Mammary epithelial cell (primary cell): ENCODE measurements at regions of chr4 and their contacts with region 1.

Region 1: DNA sequence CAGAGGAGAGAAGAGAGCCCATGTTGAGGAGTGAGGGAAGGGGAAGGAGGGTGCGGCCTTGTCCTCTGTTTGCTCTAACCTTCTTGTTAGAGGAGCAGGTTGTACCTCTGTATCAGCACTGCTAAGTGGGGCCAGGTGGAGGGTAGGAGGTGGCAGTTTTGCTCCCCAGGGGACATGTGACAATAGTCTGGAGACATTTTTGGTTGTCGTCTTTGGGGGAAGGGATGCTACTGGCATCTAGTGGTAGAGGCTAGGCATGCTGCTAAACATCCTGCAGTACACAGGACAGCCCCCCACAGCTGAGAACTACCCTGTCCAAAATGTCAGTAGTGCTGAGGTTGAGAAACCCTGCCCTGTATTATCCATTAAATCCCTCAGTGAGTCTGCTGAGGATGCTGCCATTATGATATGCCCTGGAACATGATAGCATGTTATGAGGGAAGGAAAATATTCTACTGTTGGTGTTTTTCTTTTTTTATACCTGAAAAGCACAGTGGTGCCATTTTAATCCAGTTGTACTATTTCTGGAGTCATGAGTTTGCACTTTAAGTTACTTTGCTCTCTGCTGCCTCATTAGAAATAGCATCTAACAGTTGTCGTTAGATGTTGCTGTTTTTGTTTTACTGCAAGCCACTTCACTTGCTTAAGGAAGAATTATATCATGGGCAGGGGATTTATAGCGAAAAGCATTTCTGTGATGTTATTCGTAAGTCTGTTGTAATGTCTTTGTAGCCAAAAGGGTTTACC is 90.6 kb downstream of the LRP2BP start:
- DNase-seq: peak; percentile 26
- H3K4me3 ChIP-seq: no peak overlapping the region
- H3K27ac ChIP-seq: peak overlapping the region; percentile 100
- H3K4me1 ChIP-seq: peaks cover 32% of the 10 kb centered on the region
- H3K27me3 ChIP-seq: no peaks in the 10 kb centered on the region
- CTCF ChIP-seq: peak; percentile 25 to 34

Region 2: GRCh38 chr4:184688447-184688846 is 616.7 kb before region 1 on chr4:
- CTCF ChIA-PET with region 1: no interaction called
- dilution Hi-C with region 1: no loop called
- in situ Hi-C with region 1: no loop called
- intact Hi-C with region 1: loop called (anchors 2 kb)
- DNase-seq: peak; percentile 92
- H3K4me3 ChIP-seq: no peak overlapping the region
- H3K27ac ChIP-seq: peak overlapping the region; percentile 69
- H3K4me1 ChIP-seq: peaks cover 23% of the 10 kb centered on the region
- H3K27me3 ChIP-seq: no peaks in the 10 kb centered on the region
- CTCF ChIP-seq: no peak

Region 3: GRCh38 chr4:185209031-185209851 is 95.9 kb before region 1 on chr4 and contains the start of gene SNX25:
- CTCF ChIA-PET with region 1: interaction called, 4 read pairs
- dilution Hi-C with region 1: no loop called
- in situ Hi-C with region 1: no loop called
- intact Hi-C with region 1: loop called (anchors 1 kb)
- DNase-seq: peak; percentile 79
- H3K4me3 ChIP-seq: peak within 1 kb of the TSS; percentile 35 to 78 (median 73)
- H3K27ac ChIP-seq: peak within 1 kb of the TSS; percentile 66
- H3K4me1 ChIP-seq: peaks cover 11% of the 10 kb centered on the region
- H3K27me3 ChIP-seq: no peaks in the 10 kb centered on the region
- CTCF ChIP-seq: no peak
- total RNA-seq, gene SNX25: 15.3 to 24.0 TPM

Region 4: GRCh38 chr4:185227131-185227551 is 78.0 kb before region 1 on chr4:
- CTCF ChIA-PET with region 1: no interaction called
- dilution Hi-C with region 1: loop called (anchors 5 kb)
- in situ Hi-C with region 1: no loop called
- intact Hi-C with region 1: no loop called
- DNase-seq: no peak
- H3K4me3 ChIP-seq: no peak overlapping the region
- H3K27ac ChIP-seq: no peak overlapping the region
- H3K4me1 ChIP-seq: no peaks in the 10 kb centered on the region
- H3K27me3 ChIP-seq: no peaks in the 10 kb centered on the region
- CTCF ChIP-seq: no peak

Region 5: DNA sequence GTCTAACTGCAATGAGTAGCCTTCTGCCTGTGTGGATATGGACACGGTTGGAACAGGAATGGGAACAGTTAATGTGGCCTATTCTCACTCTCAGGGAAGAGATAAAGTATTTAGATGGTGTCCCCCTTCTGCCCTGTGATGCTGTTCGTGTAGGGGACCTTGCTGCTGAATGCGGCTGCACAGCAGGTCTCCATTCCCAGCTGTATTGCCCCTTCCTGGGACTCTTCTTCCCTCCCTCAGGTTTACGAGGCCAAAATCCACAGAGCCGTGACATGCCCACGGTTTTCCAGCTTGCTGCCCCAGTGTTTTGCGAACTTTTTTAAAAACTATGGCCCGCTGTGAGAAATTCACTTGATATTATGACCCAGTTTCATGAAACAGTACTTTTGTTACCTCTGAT is 45.4 kb before region 1 on chr4:
- CTCF ChIA-PET with region 1: no interaction called
- dilution Hi-C with region 1: no loop called
- in situ Hi-C with region 1: no loop called
- intact Hi-C with region 1: loop called (anchors 2 kb)
- DNase-seq: no peak
- H3K4me3 ChIP-seq: no peak overlapping the region
- H3K27ac ChIP-seq: no peak overlapping the region
- H3K4me1 ChIP-seq: peaks cover 19% of the 10 kb centered on the region
- H3K27me3 ChIP-seq: no peaks in the 10 kb centered on the region
- CTCF ChIP-seq: no peak

Region 6: GRCh38 chr4:185437809-185438208 is 132.7 kb after region 1 on chr4:
- CTCF ChIA-PET with region 1: no interaction called
- dilution Hi-C with region 1: no loop called
- in situ Hi-C with region 1: no loop called
- intact Hi-C with region 1: no loop called
- DNase-seq: no peak
- H3K4me3 ChIP-seq: no peak overlapping the region
- H3K27ac ChIP-seq: no peak overlapping the region
- H3K4me1 ChIP-seq: no peaks in the 10 kb centered on the region
- H3K27me3 ChIP-seq: no peaks in the 10 kb centered on the region
- CTCF ChIP-seq: no peak

Region 7: DNA sequence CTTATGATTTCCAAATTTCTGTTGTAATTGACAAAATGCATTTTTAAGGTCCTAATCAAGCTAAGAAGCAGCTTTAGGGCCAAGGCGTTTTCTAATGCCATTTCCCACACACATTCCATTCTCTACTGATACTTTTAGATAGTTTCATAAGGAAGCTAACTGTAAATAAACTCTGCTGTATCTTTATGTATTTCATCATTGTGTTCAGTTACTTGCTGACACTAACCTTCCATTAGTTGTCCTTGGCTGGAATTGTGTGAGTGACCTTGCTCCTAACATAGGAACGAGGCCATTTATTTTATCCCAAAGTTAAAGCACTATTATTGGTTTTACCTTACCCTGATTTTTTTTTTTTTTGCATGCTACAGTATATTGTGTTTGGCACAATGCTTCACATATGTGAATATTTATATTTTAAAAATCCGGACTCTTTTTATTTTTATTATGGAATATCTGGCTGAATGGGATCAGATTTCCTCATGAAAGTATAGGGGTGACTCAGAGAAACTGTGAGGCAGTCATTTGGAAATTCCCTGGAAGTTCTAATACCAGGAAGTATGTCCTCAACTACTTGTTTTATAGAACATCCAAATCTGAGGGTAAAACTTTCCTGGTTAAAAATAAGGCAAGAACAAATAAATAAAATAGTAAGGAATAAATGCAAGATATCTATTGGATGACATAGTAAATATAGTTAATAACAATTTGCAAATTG is 569.6 kb after region 1 on chr4:
- CTCF ChIA-PET with region 1: no interaction called
- dilution Hi-C with region 1: no loop called
- in situ Hi-C with region 1: no loop called
- intact Hi-C with region 1: no loop called
- DNase-seq: peak; percentile 65
- H3K4me3 ChIP-seq: no peak overlapping the region
- H3K27ac ChIP-seq: peak overlapping the region; percentile 75
- H3K4me1 ChIP-seq: peaks cover 4% of the 10 kb centered on the region
- H3K27me3 ChIP-seq: no peaks in the 10 kb centered on the region
- CTCF ChIP-seq: no peak